ENCODE measurements at regions of chr6 and their contacts with region 1.

Region 1: GRCh38 chr6:135044639-135045038 is 10.0 kb downstream of the HBS1L start:
- DNase-seq: no peak
- H3K4me3 Mint-ChIP-seq: no peak overlapping the region
- H3K27ac Mint-ChIP-seq: no peak overlapping the region
- H3K4me1 Mint-ChIP-seq: peaks cover 13% of the 10 kb centered on the region
- H3K27me3 Mint-ChIP-seq: no peaks in the 10 kb centered on the region
- CTCF ChIP-seq: no peak

Region 2: GRCh38 chr6:135054569-135055498 is 10.2 kb after region 1 on chr6 and contains the start of gene HBS1L:
- CTCF ChIA-PET with region 1: interaction called, 6 read pairs
- POLR2A ChIA-PET with region 1: interaction called, 17 read pairs
- intact Hi-C with region 1: no loop called
- DNase-seq: peak; percentile 98
- H3K4me3 Mint-ChIP-seq: peak within 1 kb of the TSS; percentile 91
- H3K27ac Mint-ChIP-seq: peak within 1 kb of the TSS; percentile 99
- H3K4me1 Mint-ChIP-seq: peaks cover 17% of the 10 kb centered on the region
- H3K27me3 Mint-ChIP-seq: peaks cover 4% of the 10 kb centered on the region
- CTCF ChIP-seq: no peak
- total RNA-seq, gene HBS1L: 97.0 and 102 TPM in 2 replicates

Region 3: GRCh38 chr6:135145063-135145800 is 100.6 kb after region 1 on chr6:
- CTCF ChIA-PET with region 1: no interaction called
- POLR2A ChIA-PET with region 1: no interaction called
- intact Hi-C with region 1: no loop called
- DNase-seq: peak; percentile 49
- H3K4me3 Mint-ChIP-seq: no peak overlapping the region
- H3K27ac Mint-ChIP-seq: no peak overlapping the region
- H3K4me1 Mint-ChIP-seq: peaks cover 6% of the 10 kb centered on the region
- H3K27me3 Mint-ChIP-seq: no peaks in the 10 kb centered on the region
- CTCF ChIP-seq: peak; percentile 65